CD14-positive monocyte (primary cell): ENCODE measurements at regions of chr12 and their contacts with region 1.

Region 1: GRCh38 chr12:124609041-124609995 is 41.9 kb upstream of the NCOR2 start:
- DNase-seq: peak; percentile 70 to 72 (median 72)
- H3K4me3 ChIP-seq: peak overlapping the region in 1 of 3 experiments; percentile 56
- H3K4me3 Mint-ChIP-seq: peak overlapping the region; percentile 73
- H3K27ac ChIP-seq: peak overlapping the region; percentile 31 to 58
- H3K27ac Mint-ChIP-seq: peak overlapping the region; percentile 86 to 93 (median 88)
- H3K4me1 ChIP-seq: peaks cover 35 to 48% of the 10 kb centered on the region in 2 donors
- H3K4me1 Mint-ChIP-seq: peaks cover 49% of the 10 kb centered on the region
- H3K27me3 ChIP-seq: peaks cover 0 to 5% of the 10 kb centered on the region in 2 donors
- H3K27me3 Mint-ChIP-seq: peaks cover 0 to 19% (median 18%) of the 10 kb centered on the region in 3 donors
- CTCF ChIP-seq: no peak

Region 2: DNA sequence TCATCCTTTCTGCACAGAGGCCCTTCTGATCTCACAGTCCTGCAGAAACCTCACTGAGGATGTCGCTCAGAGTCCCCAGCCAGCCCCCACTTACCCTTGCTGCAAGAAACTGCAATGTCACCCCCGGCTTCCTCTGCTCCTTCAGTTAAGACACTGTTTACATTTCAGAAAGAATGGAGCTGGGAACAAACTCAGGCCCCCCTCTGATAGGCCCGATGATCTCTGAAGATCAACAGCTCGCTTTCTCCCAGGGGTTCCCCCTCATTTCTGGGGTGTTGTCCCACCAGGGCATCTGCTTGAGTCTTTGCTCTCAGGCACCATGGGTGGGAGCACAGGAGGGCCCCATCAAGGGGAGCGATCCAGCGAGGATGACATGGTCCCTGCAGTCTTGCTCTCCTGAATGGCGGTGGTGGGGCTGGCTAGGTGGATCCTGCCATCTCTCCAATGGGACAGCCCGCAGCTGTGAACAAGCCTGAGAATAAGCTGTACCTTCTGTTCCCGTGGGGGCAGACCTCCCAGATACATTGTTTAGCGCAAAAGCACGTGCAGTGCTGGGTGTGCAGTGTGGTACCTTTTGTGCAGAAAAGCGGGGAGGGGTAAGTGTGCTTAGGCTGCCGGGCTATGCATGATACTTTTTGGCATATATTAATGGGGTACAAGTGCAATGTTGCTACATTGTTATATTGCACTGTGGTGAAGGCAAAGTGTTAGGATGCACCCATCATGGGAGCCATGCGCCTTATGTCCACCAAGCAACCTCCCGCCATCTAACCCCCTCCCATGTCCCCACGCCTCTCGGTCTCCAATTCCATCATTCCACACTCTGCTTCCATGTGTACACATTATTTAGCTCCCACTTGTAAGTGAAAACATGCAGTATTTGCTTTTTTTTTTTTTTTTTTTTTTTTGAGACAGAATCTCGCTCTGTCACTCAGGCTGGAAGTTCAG is 35.2 kb before region 1 on chr12:
- intact Hi-C with region 1: loop called in 1 of 2 experiments (anchors 5 kb)
- DNase-seq: peak in 2 of 3 donors; percentile 35 to 40
- H3K4me3 ChIP-seq: no peak overlapping the region
- H3K4me3 Mint-ChIP-seq: no peak overlapping the region
- H3K27ac ChIP-seq: peak overlapping the region; percentile 20 to 53
- H3K27ac Mint-ChIP-seq: peak overlapping the region in 4 of 7 donors; percentile 30 to 75 (median 56)
- H3K4me1 ChIP-seq: peaks cover 21 to 23% of the 10 kb centered on the region in 2 donors
- H3K4me1 Mint-ChIP-seq: peaks cover 26% of the 10 kb centered on the region
- H3K27me3 ChIP-seq: no peaks in the 10 kb centered on the region
- H3K27me3 Mint-ChIP-seq: peaks cover 0 to 4% (median 1%) of the 10 kb centered on the region in 3 donors
- CTCF ChIP-seq: no peak

Region 3: DNA sequence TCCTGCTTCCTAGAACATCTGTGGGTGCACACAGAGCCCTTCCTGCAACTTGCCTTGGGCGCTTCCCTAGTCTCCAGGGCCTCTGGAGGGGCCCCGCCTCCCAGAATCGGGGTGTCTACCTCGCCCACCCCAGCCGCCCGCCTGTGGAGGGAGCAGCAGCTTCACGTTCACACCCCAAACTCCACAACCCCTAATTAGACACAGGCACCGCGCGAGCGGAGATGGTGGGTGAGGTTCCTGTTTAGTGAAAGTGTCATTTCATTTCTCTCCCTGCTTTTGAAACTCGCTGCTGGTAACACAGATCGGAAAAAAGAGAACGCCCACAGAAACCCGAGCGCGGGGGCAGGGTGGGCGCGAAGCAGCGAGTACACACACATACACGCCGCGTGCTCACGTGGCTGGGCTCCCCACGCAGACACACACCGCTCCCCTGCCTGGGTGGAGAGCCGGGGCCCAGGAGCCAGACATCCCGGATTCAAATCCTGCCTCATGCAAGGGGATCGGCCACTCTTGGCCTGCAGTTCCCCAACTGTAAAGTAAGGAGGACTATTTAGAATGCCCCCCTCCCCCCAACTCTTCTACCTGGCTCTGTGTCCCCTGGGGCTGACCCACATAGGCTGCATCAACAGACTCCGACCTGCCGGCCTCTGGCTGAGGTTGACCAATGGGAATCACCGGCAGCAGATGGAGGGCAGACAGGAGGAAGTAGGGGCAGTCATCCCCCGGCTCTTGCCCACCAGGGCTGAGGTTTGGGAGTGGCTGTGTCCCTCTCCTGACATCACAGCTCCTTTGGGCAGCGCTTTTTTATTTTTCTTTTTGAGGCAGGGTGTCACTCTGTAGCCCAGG is 37.3 kb after region 1 on chr12:
- intact Hi-C with region 1: loop called in 1 of 2 experiments (anchors 5 kb)
- DNase-seq: peak; percentile 46 to 67 (median 61)
- H3K4me3 ChIP-seq: peak overlapping the region in 1 of 3 experiments; percentile 55
- H3K4me3 Mint-ChIP-seq: peak overlapping the region; percentile 54 to 80
- H3K27ac ChIP-seq: peak overlapping the region; percentile 73 to 81
- H3K27ac Mint-ChIP-seq: peak overlapping the region; percentile 73 to 94 (median 85)
- H3K4me1 ChIP-seq: peaks cover 32 to 37% of the 10 kb centered on the region in 2 donors
- H3K4me1 Mint-ChIP-seq: peaks cover 43% of the 10 kb centered on the region
- H3K27me3 ChIP-seq: no peaks in the 10 kb centered on the region
- H3K27me3 Mint-ChIP-seq: peaks cover 0 to 6% (median 0%) of the 10 kb centered on the region in 3 donors
- CTCF ChIP-seq: no peak